ENCODE measurements at regions of chr15 and their contacts with region 1.

Region 1: GRCh38 chr15:99059010-99059981 is 45.6 kb upstream of the SYNM start:
- DNase-seq: peak; percentile 52
- H3K4me3 ChIP-seq: peak overlapping the region; percentile 45
- CTCF ChIP-seq: peak; percentile 46

Region 2: GRCh38 chr15:98428253-98428989 is 630.9 kb before region 1 on chr15:
- in situ Hi-C with region 1: loop called (anchors 25 kb)
- DNase-seq: peak; percentile 4
- H3K4me3 ChIP-seq: peak overlapping the region; percentile 37
- CTCF ChIP-seq: peak; percentile 65

Region 3: DNA sequence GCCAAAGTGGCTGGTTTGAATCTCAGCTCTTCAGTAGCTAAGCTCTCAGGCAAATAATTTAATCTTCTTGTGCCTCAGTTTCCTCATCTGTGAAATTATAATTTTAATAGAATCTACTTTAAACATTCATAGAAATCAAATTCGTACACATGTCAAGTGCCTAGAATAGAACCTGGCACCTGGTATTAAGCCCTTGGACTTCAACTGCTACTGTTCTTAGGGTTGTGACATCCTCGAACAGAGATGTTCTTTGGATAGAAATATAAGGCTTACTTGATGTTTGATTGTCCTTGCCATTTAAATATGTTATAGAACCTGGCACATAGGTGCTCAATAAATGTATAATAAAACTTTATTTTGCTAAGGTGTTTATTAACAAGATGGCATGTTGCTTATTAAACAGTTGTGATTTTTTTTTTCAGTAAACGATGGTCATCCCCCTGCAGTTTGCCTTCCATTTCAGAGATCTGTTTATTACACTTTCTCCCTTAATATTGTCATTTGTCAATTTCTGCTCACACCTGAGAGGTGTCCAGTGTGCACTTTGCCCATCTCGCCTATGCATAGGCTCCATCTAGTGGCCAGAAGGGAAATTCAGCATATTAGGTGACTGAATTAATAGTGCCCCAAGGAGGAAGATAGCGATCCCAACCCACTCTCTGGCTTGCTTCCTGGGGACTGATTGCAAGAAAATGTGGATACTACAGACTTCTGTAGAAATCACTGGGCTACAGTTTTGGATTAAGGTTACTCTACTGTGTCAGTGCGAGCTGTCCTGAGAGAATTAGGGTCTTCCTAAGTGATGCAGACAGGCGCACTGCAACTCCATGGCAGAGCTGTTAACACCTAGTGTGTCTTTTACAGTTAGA is 400.2 kb before region 1 on chr15:
- in situ Hi-C with region 1: loop called (anchors 25 kb)
- DNase-seq: no peak
- H3K4me3 ChIP-seq: no peak overlapping the region
- CTCF ChIP-seq: peak; percentile 93

Region 4: GRCh38 chr15:98779463-98780071 is 279.7 kb before region 1 on chr15:
- in situ Hi-C with region 1: loop called (anchors 10 kb)
- DNase-seq: peak; percentile 38
- H3K4me3 ChIP-seq: no peak overlapping the region
- CTCF ChIP-seq: peak; percentile 96

Measured in astrocyte of the cerebellum (primary cell).